ENCODE measurements at regions of chr12 and their contacts with region 1.

Region 1: DNA sequence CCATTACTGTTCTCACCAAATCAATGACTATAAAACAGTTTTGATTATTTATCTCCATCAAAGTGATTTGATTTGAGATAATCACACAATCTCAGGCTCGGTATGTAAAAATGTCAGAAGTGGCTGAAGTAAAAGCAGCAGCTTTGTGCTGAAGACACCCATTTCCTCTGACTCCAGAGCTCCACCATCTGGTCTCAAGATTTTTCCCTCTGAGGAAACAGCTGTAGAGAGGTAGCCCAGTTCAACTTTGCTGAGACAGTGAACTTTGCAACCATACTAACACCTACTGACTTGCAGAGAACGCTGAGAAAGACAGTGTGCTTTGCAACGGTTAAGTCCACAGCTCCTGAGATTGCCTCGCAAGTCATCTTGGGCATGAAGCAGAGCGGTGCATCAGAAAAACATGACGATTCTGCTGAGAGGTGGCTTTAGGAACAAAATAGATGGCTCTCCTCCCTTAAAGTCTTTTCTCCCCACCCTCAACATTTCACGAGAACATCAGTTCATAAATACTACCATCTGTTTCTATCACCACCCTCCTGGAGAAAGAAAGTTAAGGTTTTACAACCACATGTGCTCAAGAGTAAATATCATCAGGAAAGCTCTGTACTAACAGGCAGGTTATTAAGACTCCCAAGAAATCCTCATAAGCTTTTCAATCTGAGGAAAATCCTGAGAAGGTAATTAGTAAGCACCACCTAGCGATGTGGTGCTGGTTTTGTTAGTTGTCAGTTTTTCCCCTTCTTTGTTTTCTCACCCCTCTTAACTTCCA is 34.8 kb downstream of the HIGD1C start:
- DNase-seq: peak in 3 of 6 donors; percentile 29 to 48 (median 30)
- ATAC-seq: peak; percentile 57 to 91 (median 86)
- H3K4me3 ChIP-seq: no peak overlapping the region
- H3K27ac ChIP-seq: no peak overlapping the region
- H3K4me1 ChIP-seq: no peaks in the 10 kb centered on the region
- H3K27me3 ChIP-seq: no peaks in the 10 kb centered on the region
- CTCF ChIP-seq: peak in 3 of 4 donors; percentile 9 to 21 (median 14)

Region 2: GRCh38 chr12:50825372-50825838 is 161.7 kb before region 1 on chr12:
- intact Hi-C with region 1: loop called in 1 of 3 experiments (anchors 5 kb)
- DNase-seq: peak in 1 of 6 donors; percentile 17
- ATAC-seq: peak; percentile 88 to 95 (median 94)
- H3K4me3 ChIP-seq: no peak overlapping the region
- H3K27ac ChIP-seq: peak overlapping the region; percentile 56 to 71 (median 64)
- H3K4me1 ChIP-seq: peaks cover 3 to 12% (median 11%) of the 10 kb centered on the region in 3 donors
- H3K27me3 ChIP-seq: no peaks in the 10 kb centered on the region
- CTCF ChIP-seq: peak in 3 of 4 donors; percentile 26 to 43 (median 40)

Region 3: DNA sequence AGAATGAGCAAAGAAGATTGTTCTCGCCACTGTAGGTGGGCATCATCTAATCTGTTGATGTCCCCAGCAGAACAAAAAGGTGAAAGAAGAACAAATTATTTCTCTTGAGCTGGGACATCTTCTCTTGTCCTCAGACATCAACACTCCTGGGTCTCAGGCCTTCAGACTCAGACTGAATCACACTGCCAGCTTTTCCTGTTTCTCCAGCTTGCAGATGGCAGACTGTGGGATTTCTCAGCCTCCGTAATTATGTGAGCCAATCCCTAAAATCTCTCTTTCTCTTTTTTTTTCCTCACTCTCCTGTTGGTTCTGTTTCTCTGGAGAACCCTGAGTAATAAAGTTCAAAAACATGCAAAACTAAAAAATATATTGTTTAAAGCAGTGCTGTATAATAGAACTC is 148.1 kb before region 1 on chr12:
- intact Hi-C with region 1: loop called in 1 of 3 experiments (anchors 5 kb)
- DNase-seq: no peak
- ATAC-seq: no peak
- H3K4me3 ChIP-seq: no peak overlapping the region
- H3K27ac ChIP-seq: no peak overlapping the region
- H3K4me1 ChIP-seq: no peaks in the 10 kb centered on the region
- H3K27me3 ChIP-seq: no peaks in the 10 kb centered on the region
- CTCF ChIP-seq: no peak